H1 (cell line): ENCODE measurements at regions of chr5 and their contacts with region 1.

Region 1: DNA sequence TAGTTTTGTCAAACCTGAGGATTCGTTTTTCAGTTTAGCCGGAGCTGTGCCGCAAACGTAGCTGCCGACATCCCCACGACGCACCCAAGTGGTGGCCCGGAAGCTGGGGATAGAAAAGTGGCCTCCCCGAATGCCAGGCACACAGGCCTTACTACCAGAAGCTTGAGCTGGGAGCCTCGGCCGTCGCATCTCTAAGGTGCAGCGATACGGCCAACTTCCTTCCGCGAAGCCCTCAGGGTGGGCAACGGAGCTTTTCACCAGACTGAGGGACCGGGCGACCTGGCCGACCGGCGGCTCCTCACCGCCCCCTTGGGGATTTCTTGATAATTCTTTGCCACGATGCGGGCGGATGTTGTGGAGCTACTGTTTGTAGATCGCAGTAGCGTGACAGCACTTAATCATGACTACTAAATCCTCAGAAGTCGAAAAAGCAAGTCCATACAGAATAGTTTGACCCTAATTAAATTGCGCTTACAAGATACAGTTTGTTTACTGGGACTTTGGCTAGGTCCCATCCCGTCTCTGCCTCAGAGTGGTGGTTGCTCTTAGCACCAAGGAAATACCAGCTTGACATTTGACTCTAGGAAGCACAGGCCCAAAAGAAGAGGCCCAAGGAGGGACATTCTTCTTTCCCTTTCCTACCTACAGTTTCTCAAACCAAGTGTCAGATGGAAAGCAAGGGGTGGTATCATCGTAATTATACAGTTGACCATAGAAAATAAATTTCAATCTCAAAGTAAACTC is 613 bp upstream of the TMEM267 start:
- DNase-seq: peak; percentile 47 to 88
- H3K4me3 ChIP-seq: peak overlapping the region; percentile 68 to 91 (median 89)
- H3K27ac ChIP-seq: peak overlapping the region; percentile 92
- H3K4me1 ChIP-seq: no peaks in the 10 kb centered on the region; a peak in 2 of 7 replicates
- H3K27me3 ChIP-seq: no peaks in the 10 kb centered on the region
- CTCF ChIP-seq: peak; percentile 61 to 66 (median 63)
- EP300 ChIP-seq: no peak
- POLR2A ChIP-seq: peak; percentile 2 to 46; a peak in 2 of 3 replicates
- RAD21 ChIP-seq: peak; percentile 64

Region 2: GRCh38 chr5:43453606-43454005 is 30.7 kb before region 1 on chr5:
- CTCF ChIA-PET with region 1: no interaction called
- POLR2A ChIA-PET with region 1: interaction called, 10 read pairs
- DNase-seq: no peak
- H3K4me3 ChIP-seq: no peak overlapping the region
- H3K27ac ChIP-seq: no peak overlapping the region
- H3K4me1 ChIP-seq: no peaks in the 10 kb centered on the region
- H3K27me3 ChIP-seq: no peaks in the 10 kb centered on the region
- CTCF ChIP-seq: no peak
- EP300 ChIP-seq: no peak
- POLR2A ChIP-seq: no peak
- RAD21 ChIP-seq: no peak

Region 3: GRCh38 chr5:43497311-43498104 is 13.2 kb after region 1 on chr5:
- CTCF ChIA-PET with region 1: interaction called, 32 read pairs
- POLR2A ChIA-PET with region 1: interaction called, 13 read pairs
- DNase-seq: no peak
- H3K4me3 ChIP-seq: no peak overlapping the region
- H3K27ac ChIP-seq: no peak overlapping the region
- H3K4me1 ChIP-seq: no peaks in the 10 kb centered on the region
- H3K27me3 ChIP-seq: no peaks in the 10 kb centered on the region
- CTCF ChIP-seq: no peak
- EP300 ChIP-seq: no peak
- POLR2A ChIP-seq: no peak
- RAD21 ChIP-seq: no peak

Region 4: DNA sequence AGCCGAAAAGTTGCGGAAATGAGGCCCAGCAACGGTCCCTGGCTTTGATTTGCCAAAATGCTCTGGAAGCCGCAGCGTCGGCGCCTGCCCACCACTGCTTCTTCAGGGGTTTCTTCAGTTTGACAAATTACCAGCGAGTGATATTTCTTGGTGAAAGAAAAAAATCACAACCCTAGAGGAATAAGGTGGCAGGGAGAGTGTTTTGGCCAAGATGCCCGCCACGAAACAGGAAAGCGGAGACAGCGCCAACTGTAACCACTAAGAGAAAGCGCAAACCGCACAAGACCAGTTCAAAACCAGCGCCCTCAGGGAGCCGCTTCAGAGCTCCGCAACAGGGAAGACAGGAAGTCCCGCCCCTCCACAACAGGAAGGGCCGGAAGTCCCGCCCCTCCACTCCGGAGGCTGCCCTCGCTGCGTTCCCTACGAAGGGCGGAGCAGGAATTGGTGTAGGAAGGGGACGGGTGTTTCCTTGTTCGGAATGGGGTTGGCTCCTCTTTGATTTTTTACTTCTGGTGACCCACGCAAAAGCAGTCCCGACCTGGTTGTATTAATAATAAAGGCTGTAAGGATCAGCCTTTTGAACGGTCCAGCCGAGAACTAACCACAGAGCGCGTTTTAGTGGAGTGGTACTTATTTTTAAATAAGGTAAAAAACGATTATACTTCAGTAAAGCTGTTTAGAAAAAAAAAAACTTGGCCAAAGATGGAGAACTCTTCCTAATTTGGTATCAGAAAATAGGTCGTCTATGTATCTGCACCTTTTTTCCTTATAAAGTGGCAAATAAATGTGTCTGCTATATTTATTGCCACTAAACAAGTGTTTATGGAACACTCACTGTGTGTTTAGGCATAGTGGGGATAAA is 30.8 kb after region 1 on chr5 and contains the start of gene C5orf34:
- CTCF ChIA-PET with region 1: interaction called, 9 read pairs
- POLR2A ChIA-PET with region 1: interaction called, 23 read pairs
- DNase-seq: peak; percentile 81 to 96
- H3K4me3 ChIP-seq: peak within 1 kb of the TSS; percentile 77 to 88 (median 86)
- H3K27ac ChIP-seq: peak within 1 kb of the TSS; percentile 92
- H3K4me1 ChIP-seq: peaks cover 0 to 4% (median 0%) of the 10 kb centered on the region in 4 experiments; a peak in 2 of 7 replicates
- H3K27me3 ChIP-seq: no peaks in the 10 kb centered on the region
- CTCF ChIP-seq: no peak
- EP300 ChIP-seq: no peak
- POLR2A ChIP-seq: peak; percentile 89 to 90
- RAD21 ChIP-seq: no peak
- total RNA-seq, gene C5orf34: 8.6 and 11.3 TPM in 2 replicates

Region 5: GRCh38 chr5:43523662-43524072 is 39.4 kb after region 1 on chr5:
- CTCF ChIA-PET with region 1: no interaction called
- POLR2A ChIA-PET with region 1: interaction called, 11 read pairs
- DNase-seq: no peak
- H3K4me3 ChIP-seq: no peak overlapping the region
- H3K27ac ChIP-seq: no peak overlapping the region
- H3K4me1 ChIP-seq: no peaks in the 10 kb centered on the region
- H3K27me3 ChIP-seq: no peaks in the 10 kb centered on the region
- CTCF ChIP-seq: no peak
- EP300 ChIP-seq: no peak
- POLR2A ChIP-seq: no peak; a peak in 1 of 3 replicates
- RAD21 ChIP-seq: no peak